Breast epithelium (tissue), 4 donors: ENCODE measurements at regions of chr3 and their contacts with region 1.

Region 1: GRCh38 chr3:176590722-176591121 is 606.6 kb downstream of the TBL1XR1 start:
- DNase-seq: no peak
- H3K4me3 ChIP-seq: no peak overlapping the region
- H3K27ac ChIP-seq: no peak overlapping the region
- H3K4me1 ChIP-seq: no peaks in the 10 kb centered on the region
- H3K27me3 ChIP-seq: no peaks in the 10 kb centered on the region
- CTCF ChIP-seq: no peak
- POLR2A ChIP-seq: no peak

Region 2: DNA sequence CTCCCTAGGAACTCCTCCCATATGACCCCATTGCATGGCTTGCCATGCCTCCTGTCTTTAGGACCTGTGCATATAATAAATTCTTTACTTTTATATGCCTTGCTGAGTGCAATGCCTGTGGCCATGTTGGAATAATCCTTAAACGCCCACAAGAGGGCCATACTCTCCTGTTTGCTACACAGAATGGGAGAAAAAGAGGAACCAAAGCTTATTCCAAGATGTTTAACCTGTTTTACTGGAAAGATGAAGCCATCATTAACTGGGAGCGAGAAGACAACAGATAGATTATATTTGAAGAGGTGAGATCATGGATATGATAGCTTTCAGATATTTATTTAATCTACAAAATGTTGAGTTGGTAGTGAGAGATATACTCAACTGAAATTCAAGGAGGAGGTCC is 633.7 kb before region 1 on chr3:
- intact Hi-C with region 1: loop called (anchors 5 kb)
- DNase-seq: no peak
- H3K4me3 ChIP-seq: no peak overlapping the region
- H3K27ac ChIP-seq: no peak overlapping the region
- H3K4me1 ChIP-seq: no peaks in the 10 kb centered on the region
- H3K27me3 ChIP-seq: no peaks in the 10 kb centered on the region
- CTCF ChIP-seq: no peak
- POLR2A ChIP-seq: no peak

Region 3: GRCh38 chr3:176848431-176849214 is 257.9 kb after region 1 on chr3:
- intact Hi-C with region 1: no loop called
- DNase-seq: no peak
- H3K4me3 ChIP-seq: no peak overlapping the region
- H3K27ac ChIP-seq: no peak overlapping the region
- H3K4me1 ChIP-seq: no peaks in the 10 kb centered on the region
- H3K27me3 ChIP-seq: no peaks in the 10 kb centered on the region
- CTCF ChIP-seq: no peak
- POLR2A ChIP-seq: no peak